Activated CD4-positive, alpha-beta memory T cell treated with anti-CD3 and anti-CD28 coated beads, Interleukin-2, amount 10 ng/mL, durations not matched to agents 7 days and 5 days (primary cell): ENCODE measurements at regions of chr3 and their contacts with region 1.

Region 1: GRCh38 chr3:46488735-46489361 is 8.9 kb upstream of the RTP3 start:
- DNase-seq: peak; percentile 94
- H3K4me3 Mint-ChIP-seq: peak overlapping the region; percentile 5
- H3K27ac Mint-ChIP-seq: no peak overlapping the region
- H3K4me1 Mint-ChIP-seq: peaks cover 17% of the 10 kb centered on the region
- H3K27me3 Mint-ChIP-seq: peaks cover 10% of the 10 kb centered on the region

Region 2: GRCh38 chr3:46312991-46313390 is 175.9 kb before region 1 on chr3:
- CTCF ChIA-PET with region 1: no interaction called
- POLR2A ChIA-PET with region 1: no interaction called
- DNase-seq: no peak
- H3K4me3 Mint-ChIP-seq: no peak overlapping the region
- H3K27ac Mint-ChIP-seq: no peak overlapping the region
- H3K4me1 Mint-ChIP-seq: peaks cover 20% of the 10 kb centered on the region
- H3K27me3 Mint-ChIP-seq: peaks cover 53% of the 10 kb centered on the region

Region 3: GRCh38 chr3:46442576-46443562 is 46.0 kb before region 1 on chr3:
- CTCF ChIA-PET with region 1: interaction called, 10 read pairs
- POLR2A ChIA-PET with region 1: no interaction called
- DNase-seq: no peak
- H3K4me3 Mint-ChIP-seq: no peak overlapping the region
- H3K27ac Mint-ChIP-seq: no peak overlapping the region
- H3K4me1 Mint-ChIP-seq: peaks cover 32% of the 10 kb centered on the region
- H3K27me3 Mint-ChIP-seq: peaks cover 4% of the 10 kb centered on the region

Region 4: GRCh38 chr3:46477145-46477544 is 11.7 kb before region 1 on chr3:
- CTCF ChIA-PET with region 1: interaction called, 22 read pairs
- POLR2A ChIA-PET with region 1: no interaction called
- DNase-seq: peak; percentile 0
- H3K4me3 Mint-ChIP-seq: no peak overlapping the region
- H3K27ac Mint-ChIP-seq: no peak overlapping the region
- H3K4me1 Mint-ChIP-seq: no peaks in the 10 kb centered on the region
- H3K27me3 Mint-ChIP-seq: peaks cover 52% of the 10 kb centered on the region

Region 5: DNA sequence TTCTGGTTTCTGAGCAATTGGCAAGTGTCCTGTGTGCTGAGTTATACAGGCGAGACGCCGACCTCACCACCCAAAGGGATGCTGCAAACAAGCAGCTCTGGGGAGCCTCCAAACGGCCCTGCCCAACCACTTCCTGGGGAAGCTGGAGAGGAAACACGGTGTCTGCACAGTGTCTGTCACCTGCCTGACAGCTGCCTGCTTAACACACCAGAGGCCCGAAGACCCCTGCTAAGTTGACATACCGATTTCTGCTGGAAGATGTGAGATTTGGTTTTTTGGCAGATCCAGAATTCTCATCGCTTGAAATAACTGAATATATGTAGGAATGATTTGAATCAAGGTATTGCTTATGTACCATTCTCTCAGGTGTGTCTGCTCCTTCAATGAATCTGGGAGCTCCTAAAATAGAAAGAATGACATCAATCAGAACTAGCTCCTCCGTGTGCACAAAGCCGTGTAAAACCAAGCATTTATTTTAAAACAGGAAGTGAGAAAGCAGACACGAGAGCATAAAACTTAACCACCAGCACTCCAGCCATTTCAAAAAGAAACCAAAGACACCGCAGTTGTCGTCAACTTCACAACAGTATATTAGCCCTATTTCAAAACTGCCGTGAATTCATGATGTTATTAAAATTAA is 50.1 kb after region 1 on chr3:
- CTCF ChIA-PET with region 1: interaction called, 65 read pairs
- POLR2A ChIA-PET with region 1: interaction called, 21 read pairs
- DNase-seq: peak; percentile 92
- H3K4me3 Mint-ChIP-seq: peak overlapping the region; percentile 57
- H3K27ac Mint-ChIP-seq: peak overlapping the region; percentile 83
- H3K4me1 Mint-ChIP-seq: peaks cover 73% of the 10 kb centered on the region
- H3K27me3 Mint-ChIP-seq: peaks cover 13% of the 10 kb centered on the region

Region 6: GRCh38 chr3:46558184-46559043 is 69.6 kb after region 1 on chr3:
- CTCF ChIA-PET with region 1: interaction called, 171 read pairs
- POLR2A ChIA-PET with region 1: interaction called, 20 read pairs
- DNase-seq: peak; percentile 77
- H3K4me3 Mint-ChIP-seq: peak overlapping the region; percentile 54
- H3K27ac Mint-ChIP-seq: no peak overlapping the region
- H3K4me1 Mint-ChIP-seq: peaks cover 27% of the 10 kb centered on the region
- H3K27me3 Mint-ChIP-seq: peaks cover 45% of the 10 kb centered on the region

Region 7: DNA sequence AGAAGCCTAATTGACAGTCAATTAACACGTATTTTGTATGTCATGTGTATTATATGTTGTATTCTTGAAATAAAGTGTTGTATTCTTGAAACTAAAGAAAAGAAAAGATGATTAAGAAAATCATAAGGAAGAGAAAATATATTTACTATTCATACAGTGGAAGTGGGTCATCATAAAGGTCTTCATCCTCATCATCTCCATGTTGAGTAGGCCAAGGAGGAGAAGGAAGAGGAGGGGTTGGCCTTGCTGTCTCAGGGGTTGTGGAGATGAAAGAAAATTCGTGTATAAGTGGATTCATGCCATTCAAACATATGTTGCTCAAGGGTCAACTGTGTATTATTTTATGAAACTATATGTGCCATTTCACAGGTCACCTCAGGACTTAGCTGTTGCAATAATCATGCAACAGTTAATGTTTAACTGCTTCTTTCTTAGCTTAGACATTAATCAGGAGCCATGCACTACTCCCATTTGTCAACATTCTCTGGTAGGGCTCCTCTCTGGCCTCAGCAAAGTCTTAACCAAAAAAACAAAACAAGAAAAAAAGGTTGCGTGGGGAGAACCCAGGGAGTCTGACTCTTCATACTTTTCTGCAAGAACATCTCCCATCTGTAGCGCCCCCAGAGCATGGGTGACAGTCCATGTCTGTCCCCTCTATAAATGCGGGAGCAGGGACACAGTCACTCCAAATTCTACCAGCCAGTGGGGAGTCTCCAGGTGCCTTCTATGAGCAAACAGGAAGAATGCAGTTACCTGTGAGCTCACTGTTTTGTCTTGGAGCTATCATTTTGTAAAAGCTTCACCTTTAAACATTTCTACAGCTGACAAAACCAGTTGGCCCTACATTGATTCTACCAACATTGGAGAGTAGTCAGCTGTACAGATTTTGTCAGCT is 97.2 kb after region 1 on chr3:
- CTCF ChIA-PET with region 1: interaction called, 11 read pairs
- POLR2A ChIA-PET with region 1: no interaction called
- DNase-seq: no peak
- H3K4me3 Mint-ChIP-seq: no peak overlapping the region
- H3K27ac Mint-ChIP-seq: no peak overlapping the region
- H3K4me1 Mint-ChIP-seq: peaks cover 7% of the 10 kb centered on the region
- H3K27me3 Mint-ChIP-seq: peaks cover 25% of the 10 kb centered on the region

Region 8: DNA sequence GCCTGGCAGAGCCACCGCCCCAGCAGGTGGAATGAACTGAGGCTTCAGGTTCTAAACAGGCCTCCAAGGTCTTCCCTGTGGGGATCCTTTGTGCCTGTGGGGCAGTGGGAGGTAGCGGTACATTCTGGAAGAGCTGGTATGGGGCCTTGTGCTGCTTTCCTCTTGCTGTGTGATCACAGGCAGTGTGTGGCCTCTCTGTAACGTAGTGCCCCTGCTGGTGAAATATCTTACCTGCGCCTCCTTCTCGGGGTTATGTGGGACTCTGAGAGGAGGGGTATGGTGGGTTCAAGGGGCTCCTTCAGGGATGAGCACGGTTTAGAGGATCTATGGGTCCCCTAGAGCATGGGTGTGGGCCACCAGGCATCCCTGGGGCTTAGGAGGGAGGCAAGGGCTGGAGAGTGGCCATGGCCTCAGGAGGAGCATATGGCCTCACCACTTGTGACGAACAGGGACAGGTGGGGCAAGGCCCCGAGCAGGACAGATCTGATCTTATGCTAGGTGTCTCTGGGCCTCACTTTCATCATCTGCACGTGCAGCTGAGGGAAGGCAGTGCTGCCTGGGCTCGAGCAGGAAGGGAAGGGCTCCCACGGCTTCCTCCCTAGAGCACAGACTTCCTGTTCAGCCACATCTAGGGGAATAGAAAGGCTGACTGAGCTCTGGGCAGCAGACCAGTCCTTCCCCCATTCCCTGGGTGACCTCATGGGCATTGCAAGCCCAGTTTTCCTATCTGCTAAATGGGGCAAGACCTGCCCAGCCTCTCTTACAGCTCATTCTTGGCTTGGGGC is 206.5 kb after region 1 on chr3:
- CTCF ChIA-PET with region 1: interaction called, 15 read pairs
- POLR2A ChIA-PET with region 1: no interaction called
- DNase-seq: peak; percentile 54
- H3K4me3 Mint-ChIP-seq: peak overlapping the region; percentile 24
- H3K27ac Mint-ChIP-seq: peak overlapping the region; percentile 77
- H3K4me1 Mint-ChIP-seq: peaks cover 40% of the 10 kb centered on the region
- H3K27me3 Mint-ChIP-seq: peaks cover 28% of the 10 kb centered on the region

Region 9: GRCh38 chr3:46895204-46895660 is 406.4 kb after region 1 on chr3:
- CTCF ChIA-PET with region 1: no interaction called
- POLR2A ChIA-PET with region 1: no interaction called
- DNase-seq: peak; percentile 78
- H3K4me3 Mint-ChIP-seq: no peak overlapping the region
- H3K27ac Mint-ChIP-seq: no peak overlapping the region
- H3K4me1 Mint-ChIP-seq: peaks cover 12% of the 10 kb centered on the region
- H3K27me3 Mint-ChIP-seq: peaks cover 56% of the 10 kb centered on the region